ENCODE measurements at regions of chrX and their contacts with region 1.

Region 1: DNA sequence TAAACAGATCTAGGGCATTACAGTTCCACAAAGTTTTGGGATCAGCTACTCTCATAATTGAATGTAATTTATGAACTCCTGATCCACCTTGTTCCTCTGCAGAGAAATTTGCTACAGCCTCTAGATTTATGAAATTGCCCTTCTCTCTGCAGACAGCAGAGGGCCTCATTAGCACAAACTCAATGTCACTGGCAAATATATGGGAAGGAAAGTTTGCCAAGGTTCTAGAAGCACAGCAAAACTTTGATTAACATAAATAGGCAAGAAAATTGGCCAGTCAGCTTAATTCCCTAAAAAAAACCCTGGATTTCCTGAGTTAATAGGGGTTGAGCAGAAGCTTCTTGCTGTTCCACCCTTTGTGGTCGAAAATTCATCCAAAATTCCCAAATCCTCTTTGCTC is 31.5 kb downstream of the PRPS1 start:
- DNase-seq: peak; percentile 32
- H3K4me3 ChIP-seq: no peak overlapping the region
- H3K27ac ChIP-seq: no peak overlapping the region
- H3K4me1 ChIP-seq: no peaks in the 10 kb centered on the region; a peak in 1 of 4 replicates
- H3K27me3 ChIP-seq: no peaks in the 10 kb centered on the region; the same call in 1 of the 2 replicates
- CTCF ChIP-seq: peak; percentile 76
- EP300 ChIP-seq: no peak
- RAD21 ChIP-seq: peak; percentile 74

Region 2: GRCh38 chrX:107672955-107673378 is 13.2 kb after region 1 on chrX:
- CTCF ChIA-PET with region 1: interaction called, 12 read pairs
- POLR2A ChIA-PET with region 1: no interaction called
- DNase-seq: peak; percentile 67
- H3K4me3 ChIP-seq: no peak overlapping the region
- H3K27ac ChIP-seq: no peak overlapping the region
- H3K4me1 ChIP-seq: no peaks in the 10 kb centered on the region
- H3K27me3 ChIP-seq: peaks cover 20% of the 10 kb centered on the region
- CTCF ChIP-seq: peak; percentile 63
- EP300 ChIP-seq: no peak
- RAD21 ChIP-seq: peak; percentile 64

Measured in SK-N-SH (cell line).